ENCODE measurements at regions of chr3 and their contacts with region 1.

Region 1: DNA sequence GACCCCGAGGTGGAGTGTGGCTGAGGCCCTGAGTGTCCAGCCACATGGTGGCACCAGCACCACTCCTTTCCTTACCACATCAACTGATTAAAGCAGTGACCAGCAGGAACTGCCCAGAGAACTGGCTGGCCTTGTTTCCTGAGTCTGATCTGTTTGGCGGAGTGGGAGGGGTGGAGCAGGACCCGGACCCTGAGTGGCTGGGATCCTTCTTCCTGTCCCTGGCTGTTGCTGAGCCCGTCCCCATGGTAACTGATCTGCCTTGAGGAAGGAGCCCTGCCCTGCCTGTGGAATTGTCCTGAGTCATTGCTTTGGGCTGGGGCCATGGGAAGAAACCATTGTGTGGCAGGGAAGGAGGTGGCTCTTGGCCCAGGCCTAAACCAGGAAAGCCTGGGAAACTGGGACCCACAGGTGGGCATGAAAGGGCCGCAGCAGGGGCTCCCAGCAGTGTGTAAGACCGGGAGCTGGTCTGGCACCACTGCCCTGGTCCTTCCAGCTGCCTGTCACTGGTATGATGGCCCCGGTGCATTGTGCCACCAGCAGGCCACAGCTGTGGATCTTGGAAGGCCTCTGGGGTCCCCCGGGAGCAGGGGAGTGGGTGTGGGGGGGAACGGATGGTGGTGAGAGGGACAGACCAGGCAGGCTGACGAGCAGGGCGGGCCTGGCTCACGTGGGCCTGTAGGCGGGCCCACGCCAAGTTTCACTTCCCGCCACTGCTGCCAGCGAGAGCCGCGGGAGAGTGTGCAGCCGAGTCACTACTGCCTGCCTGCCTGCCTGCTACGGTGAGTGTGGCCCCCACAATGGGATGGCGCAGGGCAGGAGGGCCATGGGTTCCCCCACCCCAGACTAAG is 19.2 kb downstream of the ATRIP start:
- DNase-seq: peak; percentile 100
- H3K4me3 ChIP-seq: peak overlapping the region; percentile 35 to 50
- H3K27ac ChIP-seq: peak overlapping the region; percentile 99 to 100
- H3K4me1 ChIP-seq: peaks cover 43% of the 10 kb centered on the region
- H3K27me3 ChIP-seq: no peaks in the 10 kb centered on the region
- CTCF ChIP-seq: peak; percentile 65 to 97 (median 96)
- POLR2A ChIP-seq: peak; percentile 91

Region 2: GRCh38 chr3:48400824-48401433 is 64.8 kb before region 1 on chr3:
- intact Hi-C with region 1: no loop called
- DNase-seq: peak; percentile 73
- H3K4me3 ChIP-seq: no peak overlapping the region
- H3K27ac ChIP-seq: peak overlapping the region; percentile 75 to 77
- H3K4me1 ChIP-seq: no peaks in the 10 kb centered on the region
- H3K27me3 ChIP-seq: no peaks in the 10 kb centered on the region
- CTCF ChIP-seq: peak; percentile 67 to 94 (median 86)
- POLR2A ChIP-seq: no peak

Region 3: DNA sequence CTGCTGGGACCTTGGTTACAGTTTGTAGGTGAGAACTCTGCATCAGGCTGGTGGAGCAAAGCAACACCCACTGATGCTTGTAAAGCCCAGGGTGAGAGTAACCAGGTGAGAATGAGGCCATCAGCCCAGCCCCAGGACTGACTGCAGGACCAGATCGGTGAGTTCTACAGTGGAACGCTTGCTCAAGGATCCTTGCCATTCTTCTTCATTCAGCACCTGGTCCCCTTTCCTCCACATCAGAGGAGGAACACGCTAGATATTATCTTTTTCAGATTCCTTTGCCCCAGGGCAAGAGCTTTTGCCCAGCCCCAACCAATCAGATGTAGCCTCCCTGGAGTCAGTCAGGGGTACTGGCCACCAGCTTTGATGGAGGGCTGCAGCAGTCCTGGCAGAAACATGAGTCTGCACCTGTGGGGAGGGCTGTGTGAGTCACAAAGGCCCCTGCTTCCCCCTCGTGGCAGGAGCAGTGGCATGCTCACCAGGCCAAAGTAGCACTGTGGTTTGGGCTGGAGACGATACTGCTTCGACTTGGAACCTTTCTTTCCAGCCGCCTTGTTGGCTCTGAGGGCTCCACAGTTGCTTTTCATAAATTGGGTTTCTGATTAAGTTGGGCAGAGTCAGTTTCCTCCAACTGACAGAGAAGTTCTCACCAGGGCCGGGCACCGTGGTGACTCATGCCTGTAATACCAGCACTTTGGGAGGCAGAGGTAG is 41.8 kb after region 1 on chr3:
- intact Hi-C with region 1: loop called (anchors 2 kb)
- DNase-seq: peak; percentile 84
- H3K4me3 ChIP-seq: no peak overlapping the region
- H3K27ac ChIP-seq: peak overlapping the region; percentile 52 to 65
- H3K4me1 ChIP-seq: peaks cover 10% of the 10 kb centered on the region
- H3K27me3 ChIP-seq: no peaks in the 10 kb centered on the region
- CTCF ChIP-seq: peak in 3 of 4 experiments; percentile 45 to 77 (median 72)
- POLR2A ChIP-seq: no peak

Region 4: GRCh38 chr3:48548729-48549705 is 83.3 kb after region 1 on chr3:
- intact Hi-C with region 1: loop called (anchors 1 kb)
- DNase-seq: peak; percentile 71
- H3K4me3 ChIP-seq: no peak overlapping the region
- H3K27ac ChIP-seq: no peak overlapping the region
- H3K4me1 ChIP-seq: no peaks in the 10 kb centered on the region
- H3K27me3 ChIP-seq: no peaks in the 10 kb centered on the region
- CTCF ChIP-seq: peak; percentile 90 to 97 (median 95)
- POLR2A ChIP-seq: no peak

Region 5: DNA sequence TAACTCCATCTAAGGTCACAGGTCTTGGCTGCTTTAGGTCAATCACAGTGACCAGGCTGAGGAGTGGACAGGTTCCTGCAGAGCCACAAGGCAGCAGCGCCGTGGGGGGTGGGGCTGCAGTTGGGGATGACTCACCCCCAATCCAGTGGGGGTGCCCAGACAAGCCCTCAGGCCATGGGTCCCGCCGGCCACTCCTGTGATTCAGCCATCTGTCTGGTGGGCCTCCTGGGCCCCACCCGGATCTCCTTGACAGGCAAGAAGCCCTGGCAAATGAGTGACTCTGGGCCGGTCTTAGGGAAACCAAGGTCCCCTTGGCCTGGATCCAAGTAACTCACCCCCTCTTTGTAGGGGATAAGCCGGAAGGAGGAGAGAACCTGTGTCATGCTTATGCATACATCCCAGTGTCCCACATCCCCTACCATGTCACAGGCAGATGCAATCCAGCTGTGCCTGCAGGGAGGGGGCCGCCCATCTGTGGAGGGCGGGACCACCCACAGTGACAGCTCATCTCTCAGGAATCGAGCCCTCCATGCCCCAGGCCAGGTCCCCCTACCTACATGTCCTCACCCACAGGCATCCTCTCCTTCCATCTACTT is 129.9 kb after region 1 on chr3:
- intact Hi-C with region 1: loop called (anchors 5 kb)
- DNase-seq: peak; percentile 48
- H3K4me3 ChIP-seq: peak overlapping the region in 1 of 2 donors; percentile 30
- H3K27ac ChIP-seq: peak overlapping the region; percentile 79 to 84
- H3K4me1 ChIP-seq: peaks cover 26% of the 10 kb centered on the region
- H3K27me3 ChIP-seq: no peaks in the 10 kb centered on the region
- CTCF ChIP-seq: no peak
- POLR2A ChIP-seq: no peak

Region 6: GRCh38 chr3:49327485-49327884 is 861.7 kb after region 1 on chr3:
- intact Hi-C with region 1: no loop called
- DNase-seq: no peak
- H3K4me3 ChIP-seq: no peak overlapping the region
- H3K27ac ChIP-seq: no peak overlapping the region
- H3K4me1 ChIP-seq: no peaks in the 10 kb centered on the region
- H3K27me3 ChIP-seq: no peaks in the 10 kb centered on the region
- CTCF ChIP-seq: peak in 1 of 4 experiments; percentile 25
- POLR2A ChIP-seq: no peak